ENCODE measurements at regions of chr7 and their contacts with region 1.

Region 1: DNA sequence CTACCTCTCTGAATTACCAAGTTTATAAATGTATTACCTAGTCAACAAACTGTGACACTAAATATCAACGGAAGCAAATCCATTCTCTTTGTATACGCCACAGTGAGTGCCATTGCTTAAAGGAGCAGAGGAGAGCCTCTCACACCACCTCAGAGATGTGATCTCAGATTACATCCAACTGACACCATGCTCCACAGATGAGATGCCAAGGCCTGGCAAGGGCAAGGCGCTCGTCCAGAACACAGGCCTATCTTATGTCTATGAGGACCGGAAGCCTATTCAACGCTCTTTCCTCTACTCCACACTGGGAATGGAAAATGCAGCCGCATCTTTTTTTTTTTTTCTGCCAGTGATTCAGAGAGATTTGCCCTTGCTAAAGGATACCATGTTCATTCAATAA is 11.4 kb downstream of the PDIA4 start:
- DNase-seq: no peak
- H3K4me3 ChIP-seq: no peak overlapping the region
- H3K27ac ChIP-seq: no peak overlapping the region
- H3K4me1 ChIP-seq: no peaks in the 10 kb centered on the region
- H3K27me3 ChIP-seq: no peaks in the 10 kb centered on the region
- CTCF ChIP-seq: no peak
- EP300 ChIP-seq: no peak
- POLR2A ChIP-seq: no peak

Region 2: GRCh38 chr7:148819697-148820360 is 197.0 kb before region 1 on chr7:
- intact Hi-C with region 1: no loop called
- DNase-seq: no peak
- H3K4me3 ChIP-seq: no peak overlapping the region
- H3K27ac ChIP-seq: no peak overlapping the region
- H3K4me1 ChIP-seq: no peaks in the 10 kb centered on the region
- H3K27me3 ChIP-seq: no peaks in the 10 kb centered on the region
- CTCF ChIP-seq: no peak
- EP300 ChIP-seq: no peak
- POLR2A ChIP-seq: no peak

Region 3: GRCh38 chr7:149053386-149053785 is 36.5 kb after region 1 on chr7:
- intact Hi-C with region 1: loop called in 1 of 4 experiments (anchors 2 kb)
- DNase-seq: no peak
- H3K4me3 ChIP-seq: no peak overlapping the region
- H3K27ac ChIP-seq: no peak overlapping the region
- H3K4me1 ChIP-seq: no peaks in the 10 kb centered on the region
- H3K27me3 ChIP-seq: no peaks in the 10 kb centered on the region
- CTCF ChIP-seq: no peak
- EP300 ChIP-seq: no peak
- POLR2A ChIP-seq: no peak

Measured in ovary (tissue), 10 donors.